ENCODE measurements at regions of chr20 and their contacts with region 1.

Region 1: GRCh38 chr20:38926142-38926933 is at the start of gene FAM83D:
- DNase-seq: peak; percentile 96
- H3K4me3 Mint-ChIP-seq: peak within 1 kb of the TSS; percentile 81
- H3K27ac Mint-ChIP-seq: peak within 1 kb of the TSS; percentile 65
- H3K4me1 Mint-ChIP-seq: peaks cover 26% of the 10 kb centered on the region
- H3K27me3 Mint-ChIP-seq: no peaks in the 10 kb centered on the region
- total RNA-seq, gene FAM83D: 15.4 and 15.6 TPM in 2 replicates

Region 2: DNA sequence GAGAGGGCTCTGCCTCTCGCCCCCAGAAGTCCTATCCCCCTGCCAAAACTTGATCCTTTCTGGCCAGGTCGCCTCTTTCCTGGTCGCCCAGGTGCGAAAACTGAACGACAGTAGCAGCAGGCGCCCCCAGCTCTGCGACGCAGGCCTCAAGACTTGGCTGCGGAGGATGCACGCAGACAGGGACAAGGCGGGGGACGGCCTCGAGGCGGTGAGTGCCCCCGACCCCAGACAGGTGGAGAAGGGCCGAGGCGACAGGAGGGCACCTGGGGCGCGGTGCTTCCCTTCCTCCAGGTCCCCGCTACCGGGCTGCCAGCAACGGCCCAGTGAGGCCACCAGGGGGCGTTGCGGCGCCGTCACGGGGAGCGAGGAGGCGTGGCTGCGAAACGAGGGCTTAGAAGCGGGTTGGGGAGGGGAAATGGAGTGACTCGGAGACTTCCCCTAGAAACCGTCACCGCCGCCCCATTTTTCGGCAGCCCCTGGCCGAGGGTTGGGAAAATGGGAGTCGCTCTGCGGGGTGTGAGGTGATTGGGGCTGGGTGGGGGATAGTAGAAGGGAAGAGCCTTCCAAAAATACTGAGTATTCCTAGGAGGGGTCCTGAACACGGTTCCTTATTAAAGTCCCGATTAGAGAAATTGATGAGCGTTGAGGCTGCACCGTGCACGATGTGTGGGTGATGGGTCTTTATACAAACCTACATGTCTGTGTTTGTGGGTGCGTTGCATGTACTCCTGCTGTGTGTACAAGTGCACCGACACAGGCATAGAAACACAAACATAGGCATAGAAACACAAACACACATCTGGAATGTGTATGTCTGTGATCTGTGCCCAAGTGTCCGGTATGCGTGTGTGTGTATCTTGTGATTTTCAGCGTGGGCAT is 280.1 kb before region 1 on chr20:
- intact Hi-C with region 1: loop called (anchors 1 kb)
- DNase-seq: peak; percentile 87
- H3K4me3 Mint-ChIP-seq: peak overlapping the region; percentile 77
- H3K27ac Mint-ChIP-seq: peak overlapping the region; percentile 23
- H3K4me1 Mint-ChIP-seq: peaks cover 7% of the 10 kb centered on the region
- H3K27me3 Mint-ChIP-seq: peaks cover 33% of the 10 kb centered on the region

Region 3: DNA sequence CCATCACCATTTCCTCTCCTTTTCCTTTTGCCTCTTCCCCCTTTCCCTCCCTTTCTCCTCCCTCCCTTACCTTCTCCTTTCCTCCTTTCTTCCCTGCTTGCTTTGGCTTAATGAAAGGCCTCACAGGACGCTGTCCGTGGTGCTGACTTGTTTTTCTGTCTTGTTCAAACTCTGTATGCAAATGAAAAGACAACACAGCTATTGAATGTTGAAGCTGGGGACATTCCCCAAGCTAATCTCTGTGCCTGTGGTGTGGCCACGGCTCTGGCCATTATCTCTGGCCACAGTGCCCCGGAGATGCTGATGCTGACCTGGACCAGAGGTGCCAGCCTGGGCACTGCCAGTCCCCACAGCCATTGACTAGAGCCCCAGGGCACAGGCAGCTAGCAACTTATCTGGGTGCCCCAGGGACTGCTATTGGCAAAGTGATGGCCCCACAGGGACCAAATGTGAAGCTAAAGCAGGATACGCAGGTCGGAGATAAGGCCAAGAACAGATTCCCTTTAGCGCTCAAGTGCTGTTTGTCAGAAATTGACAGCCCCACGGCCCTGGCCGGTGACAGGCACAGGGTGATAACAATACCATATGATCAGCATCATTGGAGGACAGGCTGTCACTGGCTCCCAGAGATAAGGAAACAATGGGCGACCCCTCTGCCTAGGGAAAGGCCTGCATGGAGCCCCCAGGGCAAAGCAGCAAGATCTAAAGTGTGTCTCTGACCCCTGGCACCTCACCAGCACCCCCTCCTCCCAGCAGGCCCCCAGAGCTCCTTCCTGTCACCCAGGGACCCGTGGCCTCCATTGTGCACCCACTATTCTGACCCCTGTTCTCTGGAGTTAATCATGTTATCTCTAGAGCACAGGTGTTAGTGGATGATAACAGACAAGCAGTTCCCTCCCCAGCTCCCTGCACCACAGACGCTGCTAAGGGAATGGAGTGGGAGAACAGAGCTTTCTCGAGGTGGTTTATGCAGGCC is 233.6 kb before region 1 on chr20:
- intact Hi-C with region 1: no loop called
- DNase-seq: peak; percentile 13
- H3K4me3 Mint-ChIP-seq: no peak overlapping the region
- H3K27ac Mint-ChIP-seq: no peak overlapping the region
- H3K4me1 Mint-ChIP-seq: no peaks in the 10 kb centered on the region
- H3K27me3 Mint-ChIP-seq: peaks cover 3% of the 10 kb centered on the region

Region 4: GRCh38 chr20:38962044-38962927 is 35.9 kb after region 1 on chr20 and contains the start of gene DHX35:
- intact Hi-C with region 1: loop called (anchors 1 kb)
- DNase-seq: peak; percentile 99
- H3K4me3 Mint-ChIP-seq: peak within 1 kb of the TSS; percentile 97
- H3K27ac Mint-ChIP-seq: peak within 1 kb of the TSS; percentile 95
- H3K4me1 Mint-ChIP-seq: peaks cover 34% of the 10 kb centered on the region
- H3K27me3 Mint-ChIP-seq: no peaks in the 10 kb centered on the region
- total RNA-seq, gene DHX35: 14.8 and 15.3 TPM in 2 replicates

Region 5: DNA sequence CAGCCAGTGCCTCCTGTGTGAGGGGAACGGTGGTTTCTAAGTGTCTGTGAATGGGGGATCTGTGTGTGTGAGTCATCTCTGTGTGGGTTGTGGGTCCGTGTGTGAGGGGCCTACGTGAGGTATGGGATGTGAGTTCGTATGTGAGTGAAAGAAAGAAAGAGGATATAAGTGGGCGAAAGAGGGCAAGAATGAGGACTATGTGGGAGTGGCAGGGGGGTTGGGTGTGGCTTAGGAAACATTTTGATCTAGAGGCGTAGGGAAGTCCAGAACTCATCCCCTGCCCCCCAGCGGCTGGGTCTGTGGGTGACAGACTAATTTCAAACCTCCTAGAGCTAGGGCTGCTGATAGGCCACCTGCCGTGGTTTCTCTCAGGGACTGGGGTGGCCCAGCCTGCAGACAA is 71.3 kb after region 1 on chr20:
- intact Hi-C with region 1: loop called (anchors 1 kb)
- DNase-seq: peak; percentile 39
- H3K4me3 Mint-ChIP-seq: peak overlapping the region; percentile 38
- H3K27ac Mint-ChIP-seq: peak overlapping the region; percentile 63
- H3K4me1 Mint-ChIP-seq: peaks cover 28% of the 10 kb centered on the region
- H3K27me3 Mint-ChIP-seq: no peaks in the 10 kb centered on the region

Region 6: DNA sequence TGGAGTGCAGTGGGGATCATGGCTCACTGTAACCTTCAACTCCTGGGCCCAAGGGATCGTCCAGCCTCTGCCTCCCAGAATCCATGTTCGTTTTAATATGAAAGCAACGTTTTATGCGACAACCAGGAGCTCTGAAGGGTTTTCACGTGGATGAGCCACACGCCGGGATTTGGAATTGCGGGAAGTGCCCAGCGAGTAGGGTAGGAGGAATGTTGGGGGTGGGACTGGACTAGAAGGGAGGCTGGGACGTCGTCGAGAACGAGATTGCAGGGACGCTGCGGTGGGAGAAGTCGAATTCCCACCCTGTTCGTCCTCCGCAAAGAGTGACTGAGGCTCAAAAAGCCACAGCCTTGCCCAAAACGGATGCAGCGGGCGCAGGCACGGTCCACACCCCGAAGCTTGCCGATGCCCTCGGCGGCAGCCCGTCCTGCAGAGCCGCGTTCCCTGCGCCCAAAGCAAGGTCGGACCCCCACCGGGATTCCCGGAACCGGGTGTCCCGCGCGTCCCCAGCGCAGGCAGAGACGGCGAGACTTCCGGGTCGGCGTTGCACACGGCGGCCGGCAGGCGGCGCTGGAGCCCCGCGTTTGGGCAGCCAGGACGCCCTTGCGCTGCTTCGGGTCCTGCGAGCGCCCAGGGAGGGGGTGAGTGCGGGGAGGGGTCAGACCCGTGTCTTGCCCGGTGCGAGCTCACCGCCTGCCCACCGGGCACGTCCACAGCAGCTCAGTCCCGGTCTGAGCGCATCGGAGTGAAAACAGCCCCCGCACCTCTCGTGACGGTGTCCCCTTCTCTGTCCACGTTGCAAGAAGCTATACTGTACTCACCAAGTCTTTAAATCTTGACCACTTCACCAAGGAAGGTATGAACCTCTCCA is 123.6 kb after region 1 on chr20:
- intact Hi-C with region 1: loop called (anchors 1 kb)
- DNase-seq: peak; percentile 75
- H3K4me3 Mint-ChIP-seq: peak overlapping the region; percentile 83
- H3K27ac Mint-ChIP-seq: peak overlapping the region; percentile 68
- H3K4me1 Mint-ChIP-seq: peaks cover 3% of the 10 kb centered on the region
- H3K27me3 Mint-ChIP-seq: peaks cover 12% of the 10 kb centered on the region